HCT116 (cell line): ENCODE measurements at regions of chr13 and their contacts with region 1.

Region 1: DNA sequence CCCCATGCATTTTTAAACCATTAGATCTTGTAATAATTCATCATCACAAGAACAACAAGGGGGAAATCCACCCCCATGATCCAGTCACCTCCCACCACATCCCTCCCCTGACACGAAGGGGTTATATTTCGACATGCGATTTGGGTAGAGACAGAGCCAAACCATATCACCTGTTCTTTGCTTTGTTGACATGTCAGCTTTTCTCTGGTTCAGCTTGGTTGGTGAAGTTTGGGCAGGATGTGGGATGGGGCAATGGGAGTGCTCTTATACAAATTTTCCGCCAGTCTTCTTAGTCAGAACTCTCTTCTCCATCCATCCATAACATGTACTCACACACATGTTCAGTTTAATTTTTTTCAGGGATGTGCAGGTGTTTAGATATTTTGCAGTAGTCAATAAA is 12.9 kb downstream of the TPP2 start:
- DNase-seq: no peak
- ATAC-seq: no peak
- H3K4me3 ChIP-seq: no peak overlapping the region
- H3K27ac ChIP-seq: no peak overlapping the region
- H3K4me1 ChIP-seq: peaks cover 0 to 2% of the 10 kb centered on the region in 2 experiments; a peak in 1 of 4 replicates
- H3K27me3 ChIP-seq: no peaks in the 10 kb centered on the region
- CTCF ChIP-seq: no peak
- POLR2A ChIP-seq: no peak
- RAD21 ChIP-seq: no peak

Region 2: GRCh38 chr13:102596147-102597028 is 13.3 kb before region 1 on chr13 and contains the start of gene TPP2:
- CTCF ChIA-PET with region 1: interaction called, 4 read pairs
- POLR2A ChIA-PET with region 1: interaction called, 10 read pairs
- RAD21 ChIA-PET with region 1: interaction called in 1 of 2 experiments, 3 read pairs
- intact Hi-C with region 1: no loop called
- DNase-seq: peak; percentile 95
- ATAC-seq: peak; percentile 92
- H3K4me3 ChIP-seq: peak within 1 kb of the TSS; percentile 78 to 97
- H3K27ac ChIP-seq: peak within 1 kb of the TSS; percentile 89
- H3K4me1 ChIP-seq: peaks cover 0 to 28% of the 10 kb centered on the region in 2 experiments; a peak in 3 of 4 replicates
- H3K27me3 ChIP-seq: no peaks in the 10 kb centered on the region
- CTCF ChIP-seq: no peak
- POLR2A ChIP-seq: peak; percentile 78
- RAD21 ChIP-seq: no peak
- total RNA-seq, gene TPP2: 36.7 TPM